ENCODE measurements at regions of chr11 and their contacts with region 1.

Region 1: GRCh38 chr11:36258730-36259360 is 30.4 kb downstream of the COMMD9 start:
- DNase-seq: peak; percentile 24
- H3K27ac ChIP-seq: peak overlapping the region; percentile 1; the same call in 1 of the 2 replicates
- CTCF ChIP-seq: no peak

Region 2: GRCh38 chr11:35688023-35688422 is 570.8 kb before region 1 on chr11:
- CTCF ChIA-PET with region 1: interaction called, 11 read pairs
- POLR2A ChIA-PET with region 1: no interaction called
- DNase-seq: no peak
- H3K27ac ChIP-seq: no peak overlapping the region
- CTCF ChIP-seq: no peak

Region 3: DNA sequence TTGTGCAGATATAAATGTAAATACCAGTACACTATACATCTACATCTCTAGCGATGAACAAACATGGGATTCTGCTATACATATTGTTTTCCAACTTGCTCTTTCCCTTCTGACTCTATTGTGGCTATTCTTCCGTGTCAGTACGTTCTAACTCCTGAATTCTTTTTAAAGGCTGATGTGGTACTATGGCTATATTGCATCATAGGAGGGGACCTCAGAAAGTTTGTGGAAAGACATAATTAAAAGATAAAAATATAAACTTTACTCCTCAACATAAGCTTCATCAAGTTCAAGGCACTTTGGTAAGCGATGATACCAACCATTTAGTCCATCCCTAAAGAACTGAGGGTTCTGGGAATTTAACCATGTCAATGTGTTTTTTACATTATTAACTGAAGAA is 242.1 kb before region 1 on chr11:
- CTCF ChIA-PET with region 1: interaction called, 11 read pairs
- POLR2A ChIA-PET with region 1: no interaction called
- DNase-seq: no peak
- H3K27ac ChIP-seq: no peak overlapping the region
- CTCF ChIP-seq: no peak